Gastrocnemius medialis (tissue), 4 donors: ENCODE measurements at regions of chr20 and their contacts with region 1.

Region 1: GRCh38 chr20:16701296-16701695 is 28.5 kb upstream of the SNRPB2 start:
- DNase-seq: no peak
- ATAC-seq: no peak
- H3K4me3 ChIP-seq: no peak overlapping the region
- H3K27ac ChIP-seq: no peak overlapping the region
- H3K4me1 ChIP-seq: no peaks in the 10 kb centered on the region
- H3K27me3 ChIP-seq: no peaks in the 10 kb centered on the region
- CTCF ChIP-seq: peak in 1 of 5 experiments; percentile 17
- POLR2A ChIP-seq: no peak

Region 2: GRCh38 chr20:16615199-16615598 is 86.1 kb before region 1 on chr20:
- in situ Hi-C with region 1: loop called in 1 of 4 experiments (anchors 25 kb)
- intact Hi-C with region 1: no loop called
- DNase-seq: no peak
- ATAC-seq: no peak
- H3K4me3 ChIP-seq: no peak overlapping the region
- H3K27ac ChIP-seq: no peak overlapping the region
- H3K4me1 ChIP-seq: no peaks in the 10 kb centered on the region
- H3K27me3 ChIP-seq: no peaks in the 10 kb centered on the region
- CTCF ChIP-seq: no peak
- POLR2A ChIP-seq: no peak

Region 3: DNA sequence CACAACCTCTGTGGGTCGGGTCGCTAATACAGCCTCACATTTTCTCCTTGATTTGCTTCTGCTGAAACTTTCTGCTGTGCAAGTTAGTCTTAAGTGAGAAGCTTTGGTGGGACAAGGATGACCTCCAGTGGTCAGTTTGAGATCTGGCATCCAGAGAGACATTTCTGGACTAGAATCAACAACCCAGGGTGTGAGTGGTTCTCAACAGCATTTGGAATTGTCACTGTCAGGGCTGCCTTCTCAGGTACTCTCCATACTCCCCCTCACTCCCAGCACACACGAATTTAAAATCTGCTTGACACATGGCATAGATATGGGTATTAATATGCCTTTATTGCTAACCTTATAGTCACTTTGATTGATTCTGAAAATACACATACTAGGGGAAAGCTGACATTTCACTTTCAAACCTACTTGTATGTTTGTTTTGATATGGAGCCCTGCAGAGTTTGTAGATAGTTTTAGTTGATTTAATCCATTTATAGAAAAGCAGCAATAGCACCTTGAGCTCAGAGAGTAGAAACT is 60.1 kb after region 1 on chr20:
- in situ Hi-C with region 1: no loop called
- intact Hi-C with region 1: loop called (anchors 5 kb)
- DNase-seq: peak in 1 of 2 donors; percentile 26
- ATAC-seq: peak; percentile 70 to 91
- H3K4me3 ChIP-seq: no peak overlapping the region
- H3K27ac ChIP-seq: no peak overlapping the region
- H3K4me1 ChIP-seq: no peaks in the 10 kb centered on the region
- H3K27me3 ChIP-seq: no peaks in the 10 kb centered on the region
- CTCF ChIP-seq: peak; percentile 53 to 71 (median 64)
- POLR2A ChIP-seq: no peak

Region 4: DNA sequence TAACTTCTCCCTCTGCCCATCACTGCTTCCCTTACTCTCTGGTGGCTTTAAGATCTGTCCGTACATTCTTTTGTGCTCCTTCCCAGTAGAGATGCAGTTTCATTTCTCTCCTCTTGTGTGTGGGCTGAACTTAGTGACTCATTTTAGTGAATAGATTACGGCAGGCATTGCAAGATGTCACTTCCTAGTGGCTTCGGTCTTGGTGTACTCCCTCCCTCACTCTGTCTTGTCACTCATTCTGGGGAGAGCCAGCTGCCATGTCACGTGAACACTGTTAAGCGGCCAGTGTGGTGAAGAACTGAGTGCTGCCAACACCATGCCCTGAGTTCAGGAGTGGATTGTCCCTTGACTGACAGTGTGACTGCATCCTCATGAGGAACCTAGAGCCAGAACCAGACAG is 162.8 kb after region 1 on chr20:
- in situ Hi-C with region 1: no loop called
- intact Hi-C with region 1: no loop called
- DNase-seq: peak in 1 of 2 donors; percentile 16
- ATAC-seq: no peak
- H3K4me3 ChIP-seq: no peak overlapping the region
- H3K27ac ChIP-seq: no peak overlapping the region
- H3K4me1 ChIP-seq: no peaks in the 10 kb centered on the region
- H3K27me3 ChIP-seq: no peaks in the 10 kb centered on the region
- CTCF ChIP-seq: no peak
- POLR2A ChIP-seq: no peak